ENCODE measurements at regions of chr15 and their contacts with region 1.

Region 1: DNA sequence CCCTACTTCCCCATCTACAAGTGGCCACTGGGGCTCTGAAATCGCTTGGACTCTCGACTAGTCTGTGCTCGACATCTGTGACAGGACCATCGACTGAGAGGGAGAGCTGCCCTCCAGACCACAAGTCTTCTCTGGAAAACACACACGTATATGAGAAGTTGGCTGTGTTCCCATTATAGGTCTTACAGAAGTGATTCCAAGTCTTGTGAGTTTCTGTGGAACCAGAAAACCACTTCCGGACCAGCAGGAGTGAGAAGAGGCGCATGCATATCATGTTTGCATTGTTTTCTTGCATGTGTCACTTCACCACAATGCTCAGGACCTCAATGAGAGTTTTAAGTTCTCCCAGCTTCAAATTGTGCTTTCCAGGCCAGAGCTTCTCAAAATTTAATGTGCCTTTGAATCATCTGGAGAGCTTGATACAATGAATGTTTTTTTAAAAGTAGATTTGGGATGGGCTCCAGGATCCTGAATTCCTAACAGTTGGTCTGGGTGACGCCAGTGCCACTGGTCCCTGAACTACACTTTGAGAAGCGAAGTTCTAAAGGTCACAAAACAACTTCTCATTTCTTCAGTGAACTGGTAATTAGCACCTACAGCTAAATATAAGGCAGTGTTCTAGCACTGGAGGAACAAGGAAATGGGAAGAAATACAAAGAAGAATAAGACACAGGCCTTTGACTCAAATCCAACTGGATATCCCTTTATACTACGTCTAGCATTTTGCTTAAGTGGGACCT is 15.7 kb downstream of the LIPC start:
- DNase-seq: peak in 1 of 2 donors; percentile 66
- ATAC-seq: peak; percentile 23
- H3K4me3 ChIP-seq: no peak overlapping the region
- H3K27ac ChIP-seq: peak overlapping the region; percentile 9 to 52
- H3K4me1 ChIP-seq: peaks cover 0 to 6% of the 10 kb centered on the region in 2 donors
- H3K27me3 ChIP-seq: no peaks in the 10 kb centered on the region

Region 2: GRCh38 chr15:58528188-58528870 is 80.9 kb after region 1 on chr15:
- intact Hi-C with region 1: loop called in 1 of 2 experiments (anchors 5 kb)
- DNase-seq: no peak
- ATAC-seq: peak; percentile 60
- H3K4me3 ChIP-seq: no peak overlapping the region
- H3K27ac ChIP-seq: peak overlapping the region in 1 of 2 donors; percentile 69
- H3K4me1 ChIP-seq: peaks cover 0 to 4% of the 10 kb centered on the region in 2 donors
- H3K27me3 ChIP-seq: no peaks in the 10 kb centered on the region

Region 3: GRCh38 chr15:58546635-58547627 is 99.5 kb after region 1 on chr15:
- intact Hi-C with region 1: loop called in 1 of 2 experiments (anchors 5 kb)
- DNase-seq: peak; percentile 77 to 83
- ATAC-seq: peak; percentile 70
- H3K4me3 ChIP-seq: no peak overlapping the region
- H3K27ac ChIP-seq: peak overlapping the region in 1 of 2 donors; percentile 75
- H3K4me1 ChIP-seq: peaks cover 0 to 4% of the 10 kb centered on the region in 2 donors
- H3K27me3 ChIP-seq: no peaks in the 10 kb centered on the region

Measured in aorta (tissue), 5 donors.